ENCODE measurements at regions of chr6 and their contacts with region 1.

Region 1: DNA sequence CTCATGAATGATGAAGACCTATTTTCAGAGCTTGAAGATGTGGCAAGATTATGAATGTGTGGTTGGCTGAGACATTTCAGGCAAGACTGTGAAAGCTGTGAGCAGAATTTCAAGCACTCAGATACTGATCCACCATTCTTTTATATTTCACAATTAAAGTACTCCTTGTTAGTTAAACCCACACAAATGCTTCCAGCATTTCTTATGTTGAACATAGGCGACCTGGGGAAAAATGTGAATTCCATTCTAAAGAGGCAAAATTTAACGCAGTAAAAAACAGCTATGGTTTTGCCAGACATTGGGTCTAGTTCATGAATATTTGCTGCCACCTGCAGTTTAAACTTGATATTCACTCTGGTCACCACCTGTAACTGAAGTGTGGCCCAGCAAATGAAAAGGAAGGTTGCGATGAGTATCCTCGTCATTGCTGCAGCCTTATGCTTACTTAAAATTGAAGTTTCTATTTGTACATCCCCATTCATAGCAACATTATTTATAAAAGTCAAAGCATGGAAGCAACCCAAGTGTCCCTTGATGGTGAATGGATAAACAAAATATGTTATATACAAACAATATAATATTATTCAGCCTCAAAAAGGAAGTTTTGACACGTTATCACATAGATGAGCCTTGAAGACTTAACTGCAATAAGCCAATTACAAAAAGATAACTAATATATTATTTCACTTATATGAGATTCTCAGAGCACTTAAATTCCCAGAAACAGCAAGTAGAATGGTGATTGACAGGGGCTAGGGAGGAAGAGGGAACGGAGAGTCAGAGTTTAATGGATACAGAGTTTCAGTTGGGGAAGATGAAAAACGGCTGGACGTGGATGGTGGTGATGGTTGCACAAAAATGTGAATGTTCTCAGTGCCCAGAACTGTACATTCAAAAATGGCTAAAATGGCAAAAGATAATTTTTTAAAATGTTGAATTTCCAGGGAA is 32.4 kb upstream of the FAM184A start:
- DNase-seq: peak in 11 of 14 experiments; percentile 6 to 82 (median 26)
- ATAC-seq: peak; percentile 91
- H3K4me3 ChIP-seq: no peak overlapping the region
- H3K4me3 Mint-ChIP-seq: peak overlapping the region; percentile 30
- H3K27ac ChIP-seq: no peak overlapping the region
- H3K27ac Mint-ChIP-seq: no peak overlapping the region
- H3K4me1 ChIP-seq: peaks cover 9% of the 10 kb centered on the region
- H3K4me1 Mint-ChIP-seq: peaks cover 13% of the 10 kb centered on the region
- H3K27me3 ChIP-seq: no peaks in the 10 kb centered on the region
- H3K27me3 Mint-ChIP-seq: no peaks in the 10 kb centered on the region
- CTCF ChIP-seq: peak; percentile 72

Region 2: GRCh38 chr6:117976030-117976651 is 1134.7 kb before region 1 on chr6:
- CTCF ChIA-PET with region 1: no interaction called
- POLR2A ChIA-PET with region 1: no interaction called
- intact Hi-C with region 1: loop called in 1 of 2 experiments (anchors 5 kb)
- DNase-seq: peak in 3 of 14 experiments; percentile 44 to 52 (median 52)
- ATAC-seq: no peak
- H3K4me3 ChIP-seq: no peak overlapping the region
- H3K4me3 Mint-ChIP-seq: no peak overlapping the region
- H3K27ac ChIP-seq: no peak overlapping the region
- H3K27ac Mint-ChIP-seq: no peak overlapping the region
- H3K4me1 ChIP-seq: no peaks in the 10 kb centered on the region
- H3K4me1 Mint-ChIP-seq: no peaks in the 10 kb centered on the region
- H3K27me3 ChIP-seq: no peaks in the 10 kb centered on the region
- H3K27me3 Mint-ChIP-seq: peaks cover 19% of the 10 kb centered on the region
- CTCF ChIP-seq: peak; percentile 71

Region 3: DNA sequence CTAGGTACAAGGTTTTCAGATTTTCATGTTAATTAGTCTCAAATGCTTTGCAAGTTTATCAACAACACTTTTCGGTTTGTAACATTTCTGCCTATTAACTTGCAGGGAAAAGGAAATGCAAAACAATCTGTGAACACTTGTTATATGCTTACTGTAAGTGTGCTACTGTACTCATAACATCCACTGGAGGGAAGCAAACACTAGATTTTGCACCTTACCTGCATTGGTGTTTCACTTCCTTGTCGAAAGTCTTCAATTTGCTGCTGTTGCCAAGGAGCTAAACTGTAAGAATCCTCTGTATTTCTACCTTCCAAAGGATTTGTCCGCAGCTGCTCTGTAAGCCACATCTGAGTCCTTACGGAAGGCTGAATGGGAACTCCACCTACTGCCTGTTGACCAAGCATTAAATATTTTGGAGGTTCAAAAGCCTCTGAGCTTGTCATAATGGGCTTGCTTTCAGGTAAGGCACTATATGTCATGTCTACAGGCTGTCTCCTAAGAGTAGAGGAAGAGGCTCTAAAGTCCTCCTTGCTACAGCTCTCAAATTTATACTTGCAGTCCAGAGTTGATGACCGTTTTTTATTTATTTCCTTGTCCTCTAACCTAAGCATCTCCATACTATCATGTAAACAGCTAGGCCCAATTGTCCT is 545.4 kb before region 1 on chr6:
- CTCF ChIA-PET with region 1: interaction called, 7 read pairs
- POLR2A ChIA-PET with region 1: no interaction called
- intact Hi-C with region 1: loop called (anchors 1 to 5 kb)
- DNase-seq: peak in 5 of 14 experiments; percentile 22 to 81 (median 75)
- ATAC-seq: peak; percentile 97
- H3K4me3 ChIP-seq: no peak overlapping the region
- H3K4me3 Mint-ChIP-seq: no peak overlapping the region
- H3K27ac ChIP-seq: peak overlapping the region in 1 of 2 donors; percentile 5
- H3K27ac Mint-ChIP-seq: peak overlapping the region; percentile 72
- H3K4me1 ChIP-seq: peaks cover 7% of the 10 kb centered on the region
- H3K4me1 Mint-ChIP-seq: peaks cover 43% of the 10 kb centered on the region
- H3K27me3 ChIP-seq: no peaks in the 10 kb centered on the region
- H3K27me3 Mint-ChIP-seq: no peaks in the 10 kb centered on the region
- CTCF ChIP-seq: peak; percentile 63

Region 4: DNA sequence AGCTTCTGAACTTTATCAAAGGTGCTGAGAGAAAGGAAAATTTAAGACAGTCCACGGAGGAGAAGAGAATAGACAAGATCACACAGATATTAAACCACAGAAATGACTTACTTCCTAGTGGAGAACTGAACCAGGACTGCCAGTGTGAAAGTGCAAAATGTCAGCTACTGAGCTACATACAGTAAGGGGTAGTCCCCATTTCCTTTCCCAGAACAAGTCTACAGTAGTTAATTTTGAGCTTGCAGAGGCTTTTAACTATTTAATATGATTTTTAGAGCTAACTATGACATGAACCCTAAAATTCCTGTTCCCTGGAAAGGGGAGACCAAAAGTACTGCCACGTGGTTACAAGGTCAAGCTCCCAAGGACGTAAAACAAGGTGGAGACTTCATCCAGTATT is 504.6 kb before region 1 on chr6:
- CTCF ChIA-PET with region 1: no interaction called
- POLR2A ChIA-PET with region 1: no interaction called
- intact Hi-C with region 1: no loop called
- DNase-seq: no peak
- ATAC-seq: no peak
- H3K4me3 ChIP-seq: no peak overlapping the region
- H3K4me3 Mint-ChIP-seq: no peak overlapping the region
- H3K27ac ChIP-seq: no peak overlapping the region
- H3K27ac Mint-ChIP-seq: peak overlapping the region; percentile 17
- H3K4me1 ChIP-seq: peaks cover 6% of the 10 kb centered on the region
- H3K4me1 Mint-ChIP-seq: peaks cover 67% of the 10 kb centered on the region
- H3K27me3 ChIP-seq: no peaks in the 10 kb centered on the region
- H3K27me3 Mint-ChIP-seq: no peaks in the 10 kb centered on the region
- CTCF ChIP-seq: no peak

Region 5: GRCh38 chr6:118968416-118968815 is 142.5 kb before region 1 on chr6:
- CTCF ChIA-PET with region 1: interaction called, 15 read pairs
- POLR2A ChIA-PET with region 1: interaction called, 16 read pairs
- intact Hi-C with region 1: loop called (anchors 1 kb)
- DNase-seq: peak in 3 of 14 experiments; percentile 12 to 29 (median 23)
- ATAC-seq: no peak
- H3K4me3 ChIP-seq: no peak overlapping the region
- H3K4me3 Mint-ChIP-seq: no peak overlapping the region
- H3K27ac ChIP-seq: no peak overlapping the region
- H3K27ac Mint-ChIP-seq: no peak overlapping the region
- H3K4me1 ChIP-seq: no peaks in the 10 kb centered on the region
- H3K4me1 Mint-ChIP-seq: no peaks in the 10 kb centered on the region
- H3K27me3 ChIP-seq: no peaks in the 10 kb centered on the region
- H3K27me3 Mint-ChIP-seq: no peaks in the 10 kb centered on the region
- CTCF ChIP-seq: peak; percentile 32

Region 6: GRCh38 chr6:118999494-119000040 is 111.3 kb before region 1 on chr6:
- CTCF ChIA-PET with region 1: no interaction called
- POLR2A ChIA-PET with region 1: no interaction called
- intact Hi-C with region 1: no loop called
- DNase-seq: no peak
- ATAC-seq: no peak
- H3K4me3 ChIP-seq: no peak overlapping the region
- H3K4me3 Mint-ChIP-seq: no peak overlapping the region
- H3K27ac ChIP-seq: no peak overlapping the region
- H3K27ac Mint-ChIP-seq: no peak overlapping the region
- H3K4me1 ChIP-seq: no peaks in the 10 kb centered on the region
- H3K4me1 Mint-ChIP-seq: peaks cover 9% of the 10 kb centered on the region
- H3K27me3 ChIP-seq: no peaks in the 10 kb centered on the region
- H3K27me3 Mint-ChIP-seq: no peaks in the 10 kb centered on the region
- CTCF ChIP-seq: no peak

Region 7: GRCh38 chr6:119078376-119079282 is 32.2 kb before region 1 on chr6 and contains the start of gene FAM184A:
- CTCF ChIA-PET with region 1: interaction called, 9 read pairs
- POLR2A ChIA-PET with region 1: interaction called, 23 read pairs
- intact Hi-C with region 1: loop called (anchors 1 to 2 kb)
- DNase-seq: peak; percentile 51 to 92 (median 71)
- ATAC-seq: peak; percentile 75
- H3K4me3 ChIP-seq: peak within 1 kb of the TSS; percentile 65
- H3K4me3 Mint-ChIP-seq: peak within 1 kb of the TSS; percentile 91
- H3K27ac ChIP-seq: peak within 1 kb of the TSS; percentile 53 to 58
- H3K27ac Mint-ChIP-seq: peak within 1 kb of the TSS; percentile 90
- H3K4me1 ChIP-seq: peaks cover 25% of the 10 kb centered on the region
- H3K4me1 Mint-ChIP-seq: peaks cover 40% of the 10 kb centered on the region
- H3K27me3 ChIP-seq: no peaks in the 10 kb centered on the region
- H3K27me3 Mint-ChIP-seq: no peaks in the 10 kb centered on the region
- CTCF ChIP-seq: no peak
- total RNA-seq, gene FAM184A: 2.9 to 3.3 TPM

Measured in CD4-positive, alpha-beta T cell (primary cell).